ENCODE measurements at regions of chr13 and their contacts with region 1.

Region 1: DNA sequence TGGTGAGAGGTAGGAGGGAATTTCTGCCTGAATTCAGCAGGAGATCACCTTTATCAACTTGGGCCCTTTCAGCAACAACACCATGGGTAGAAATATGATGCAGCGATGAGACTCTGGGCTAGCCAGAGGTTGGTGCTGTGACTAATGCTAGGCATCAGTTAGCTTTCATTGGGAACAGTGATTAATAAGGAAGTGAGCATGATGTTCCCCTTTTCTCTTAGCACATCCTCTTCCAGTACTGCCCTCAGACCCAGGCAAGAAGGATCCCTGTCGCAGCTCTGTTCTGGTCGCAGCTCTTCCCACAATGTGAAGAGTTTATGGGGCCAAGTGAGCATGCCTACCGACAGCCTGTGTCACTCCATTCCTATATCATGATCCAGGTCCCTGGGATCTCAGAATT is 100.5 kb downstream of the FLT1 start:
- DNase-seq: no peak
- ATAC-seq: peak; percentile 48

Region 2: DNA sequence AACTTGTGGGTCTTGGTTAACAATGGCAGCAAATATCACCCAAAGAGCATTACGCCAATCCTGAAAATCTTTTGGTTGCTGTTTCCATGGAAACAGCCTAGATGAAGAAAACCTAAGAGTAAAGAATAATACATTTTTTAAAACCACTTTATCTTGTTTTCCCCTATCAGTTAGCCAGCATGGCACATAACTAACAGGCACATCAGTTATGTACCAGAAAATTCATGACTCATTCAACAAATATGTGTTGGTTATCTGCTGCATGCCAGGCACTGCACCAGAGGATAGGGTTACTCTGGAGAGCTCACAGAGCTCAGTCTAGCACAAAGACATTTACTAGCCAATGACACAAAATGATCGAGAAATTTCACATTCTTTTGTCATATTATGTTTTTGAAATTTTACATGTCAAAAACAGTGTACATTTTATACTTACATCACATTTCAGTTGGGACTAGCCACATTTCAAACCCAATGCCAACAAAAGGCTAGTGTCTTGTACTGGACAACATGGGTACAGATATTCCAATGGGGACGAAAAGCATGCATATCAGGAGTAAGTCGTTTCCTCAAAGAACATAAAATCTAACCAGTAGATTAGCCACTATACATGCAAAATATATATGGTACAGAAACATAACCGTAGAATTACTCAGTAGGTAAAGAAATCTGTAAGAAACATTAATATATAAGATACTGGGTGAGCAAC is 794.4 kb before region 1 on chr13:
- intact Hi-C with region 1: no loop called
- DNase-seq: no peak
- ATAC-seq: peak; percentile 74

Region 3: DNA sequence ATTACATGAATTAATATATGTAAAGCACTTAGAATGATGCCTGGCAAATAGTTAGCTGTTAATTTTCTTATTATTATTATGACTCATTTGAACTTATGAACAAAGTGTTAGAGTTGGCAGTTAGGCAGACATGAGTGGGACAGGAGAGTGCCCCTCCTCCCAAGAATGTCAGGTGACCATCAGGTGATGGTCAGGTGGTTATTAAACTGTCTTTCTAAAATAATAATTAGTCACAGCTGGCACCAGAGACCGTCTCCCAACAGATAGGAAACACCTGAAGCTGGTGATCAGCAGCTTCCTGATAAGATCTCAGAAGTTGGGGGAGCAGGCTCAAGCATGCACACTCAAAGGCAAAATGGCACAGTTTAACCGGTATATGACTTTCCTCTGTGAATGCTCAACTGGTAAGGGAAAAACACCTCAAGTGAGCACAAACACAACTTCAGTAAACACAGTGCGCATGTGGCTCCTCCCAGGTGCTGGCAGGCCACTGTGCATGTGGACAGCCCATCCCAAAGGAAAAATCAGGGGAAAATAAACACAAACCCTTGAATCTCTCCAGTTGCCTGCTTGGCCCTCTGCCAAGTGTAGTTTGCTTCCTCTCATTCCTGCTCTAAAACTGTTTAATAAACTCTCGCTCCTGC is 46.5 kb after region 1 on chr13:
- intact Hi-C with region 1: no loop called
- DNase-seq: no peak
- ATAC-seq: no peak

Region 4: DNA sequence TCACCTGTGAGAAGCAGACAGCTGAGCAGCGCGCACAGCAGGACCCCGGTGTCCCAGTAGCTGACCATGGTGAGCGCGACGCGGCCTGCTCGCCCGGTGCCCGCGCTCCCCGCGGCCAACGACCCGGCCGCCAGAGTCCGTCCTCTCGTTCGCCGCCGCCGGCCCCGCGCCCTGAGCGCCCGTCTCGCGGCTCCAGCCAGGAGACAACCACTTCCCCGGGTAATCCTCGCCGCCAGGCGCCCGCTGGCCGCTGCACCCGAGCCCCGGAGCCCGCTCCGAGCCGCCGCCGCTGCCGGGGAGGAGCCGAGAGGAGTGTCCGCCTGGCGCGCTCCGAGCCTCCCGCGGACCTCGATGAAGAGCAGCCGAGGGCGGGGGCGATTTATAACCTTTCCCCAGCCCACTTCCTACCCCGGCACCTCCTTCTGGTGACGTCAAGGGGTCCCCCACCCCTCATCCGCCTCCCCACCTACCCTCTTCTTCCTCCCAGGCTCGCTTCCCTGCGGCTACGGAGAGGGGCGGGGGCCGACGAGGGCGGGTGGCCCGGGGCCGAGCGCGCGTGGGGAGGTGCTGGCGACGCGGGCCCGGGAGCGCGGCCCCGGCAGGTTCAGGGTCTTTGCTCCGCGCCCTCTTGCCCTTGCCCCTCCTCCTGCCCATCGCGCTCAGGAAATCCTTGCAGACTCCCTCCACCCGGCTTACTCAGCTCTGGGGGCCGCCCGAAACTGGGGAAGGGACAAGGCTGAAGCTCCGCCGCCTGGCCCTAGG is 100.5 kb after region 1 on chr13 and contains the start of gene FLT1:
- intact Hi-C with region 1: loop called (anchors 5 kb)
- DNase-seq: peak; percentile 79
- ATAC-seq: peak; percentile 69
- total RNA-seq, gene FLT1: 41.0 TPM

Measured in Right ventricle myocardium inferior (tissue), 1 donor.